ENCODE measurements at regions of chr18 and their contacts with region 1.

Region 1: DNA sequence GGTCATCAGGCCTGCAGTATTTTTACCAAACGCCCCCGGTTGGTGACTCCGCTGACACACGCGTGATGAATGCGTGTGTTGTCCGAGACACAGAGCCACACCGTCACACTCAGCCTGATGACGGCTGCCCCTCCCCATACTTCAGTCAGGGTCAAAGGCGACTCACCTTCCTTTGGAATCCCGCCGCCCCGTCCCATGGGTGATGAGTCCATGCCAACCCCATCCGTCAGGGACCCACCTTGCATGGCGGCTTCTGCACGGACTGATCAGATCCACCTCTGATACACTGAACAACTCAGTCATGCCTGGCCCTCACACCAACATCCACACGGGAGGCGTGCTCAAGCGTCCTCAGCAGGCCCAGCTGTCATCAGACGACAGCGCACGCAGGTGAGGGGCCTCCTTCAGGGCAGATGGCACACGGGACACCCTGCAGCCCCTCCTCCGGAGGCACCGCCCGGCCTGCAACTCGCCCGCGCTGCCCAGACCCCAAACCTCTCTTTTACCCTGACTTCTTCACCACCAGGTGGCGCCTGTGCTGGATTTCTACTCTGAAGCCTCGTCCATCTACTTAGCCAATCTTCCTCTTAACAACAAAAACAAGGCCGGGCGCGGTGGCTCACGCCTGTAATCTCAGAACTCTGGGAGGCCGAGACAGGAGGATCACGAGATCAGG is 89.2 kb downstream of the ZNF516 start:
- DNase-seq: no peak
- H3K4me3 ChIP-seq: no peak overlapping the region
- H3K27ac ChIP-seq: no peak overlapping the region
- H3K4me1 ChIP-seq: no peaks in the 10 kb centered on the region
- H3K27me3 ChIP-seq: no peaks in the 10 kb centered on the region
- CTCF ChIP-seq: peak; percentile 31 to 64 (median 47)
- POLR2A ChIP-seq: no peak

Region 2: GRCh38 chr18:75728621-75729020 is 677.2 kb before region 1 on chr18:
- intact Hi-C with region 1: no loop called
- DNase-seq: no peak
- H3K4me3 ChIP-seq: no peak overlapping the region
- H3K27ac ChIP-seq: no peak overlapping the region
- H3K4me1 ChIP-seq: no peaks in the 10 kb centered on the region
- H3K27me3 ChIP-seq: no peaks in the 10 kb centered on the region
- CTCF ChIP-seq: no peak
- POLR2A ChIP-seq: no peak

Region 3: GRCh38 chr18:76426737-76427305 is 21.0 kb after region 1 on chr18:
- intact Hi-C with region 1: no loop called
- DNase-seq: no peak
- H3K4me3 ChIP-seq: no peak overlapping the region
- H3K27ac ChIP-seq: no peak overlapping the region
- H3K4me1 ChIP-seq: peaks cover 0 to 5% of the 10 kb centered on the region in 2 donors
- H3K27me3 ChIP-seq: no peaks in the 10 kb centered on the region
- CTCF ChIP-seq: peak in 1 of 3 donors; percentile 39
- POLR2A ChIP-seq: no peak

Region 4: DNA sequence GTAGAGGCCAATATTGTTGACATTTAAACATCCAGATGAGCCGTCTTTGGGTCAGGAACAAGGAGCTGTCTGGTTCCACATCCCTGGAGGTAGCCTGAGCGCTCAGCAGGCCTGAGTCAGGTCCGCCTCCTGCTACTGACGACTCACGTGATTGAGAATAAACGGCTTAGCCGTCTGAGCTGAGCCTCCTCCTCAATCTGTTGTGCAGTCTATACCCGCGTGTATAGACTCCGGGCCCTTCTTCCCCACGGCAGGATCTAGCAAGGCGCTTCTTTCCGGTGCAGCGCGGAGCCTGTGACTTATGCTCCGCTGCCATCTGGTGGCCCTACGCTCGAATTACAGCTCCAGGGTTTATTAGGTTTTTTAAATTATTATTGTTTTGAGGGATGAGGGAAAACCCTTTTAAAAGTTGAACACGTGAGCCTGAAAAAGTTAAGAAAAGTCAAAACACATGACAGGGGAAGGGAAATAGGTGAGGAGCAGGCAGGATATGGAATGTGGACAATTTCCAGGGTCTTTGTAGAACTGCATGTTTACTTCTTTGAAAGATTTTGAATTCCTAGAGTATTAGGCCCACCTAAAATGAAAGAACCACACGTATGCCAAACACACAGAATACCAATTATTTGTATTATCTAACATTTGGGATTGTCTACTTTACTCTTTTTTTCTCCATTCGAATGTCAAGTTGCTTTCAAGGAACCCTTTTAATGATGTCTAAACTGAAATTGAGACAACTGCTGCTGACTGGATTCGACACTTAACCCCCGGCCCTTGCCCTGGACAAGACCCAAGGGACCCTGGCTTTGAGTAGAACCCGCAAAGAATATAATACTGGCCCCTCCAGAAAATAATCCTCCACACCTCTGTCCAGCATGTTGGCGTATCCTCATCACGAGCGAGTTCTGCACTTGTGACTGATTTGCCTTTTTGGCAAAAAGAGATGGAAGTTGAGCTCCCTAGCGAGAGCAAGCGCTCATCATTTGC is 304.1 kb after region 1 on chr18:
- intact Hi-C with region 1: loop called (anchors 10 kb)
- DNase-seq: peak; percentile 33 to 60
- H3K4me3 ChIP-seq: peak overlapping the region in 1 of 3 donors; percentile 39
- H3K27ac ChIP-seq: no peak overlapping the region
- H3K4me1 ChIP-seq: no peaks in the 10 kb centered on the region
- H3K27me3 ChIP-seq: no peaks in the 10 kb centered on the region
- CTCF ChIP-seq: peak; percentile 62 to 92 (median 86)
- POLR2A ChIP-seq: no peak

Region 5: DNA sequence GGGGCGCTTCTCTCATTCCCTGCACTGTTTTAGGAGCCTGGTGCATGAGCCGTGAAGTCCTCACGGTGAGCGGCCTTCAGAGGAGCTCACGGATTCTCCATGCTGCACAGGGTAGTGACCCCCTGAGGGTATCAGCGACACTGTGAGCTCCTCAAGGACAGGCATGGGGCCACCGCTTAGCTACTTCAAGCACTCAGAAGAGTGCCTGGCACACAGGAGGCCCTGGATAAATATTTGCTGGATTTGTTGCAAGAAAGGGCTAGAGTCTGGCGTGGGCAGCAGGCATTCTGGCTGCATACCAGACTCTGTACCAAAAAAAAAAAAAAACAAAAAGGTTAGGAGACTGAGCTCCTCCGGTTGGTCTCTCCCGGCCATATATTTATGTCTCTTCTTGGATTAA is 732.5 kb after region 1 on chr18:
- intact Hi-C with region 1: loop called (anchors 5 kb)
- DNase-seq: no peak
- H3K4me3 ChIP-seq: no peak overlapping the region
- H3K27ac ChIP-seq: no peak overlapping the region
- H3K4me1 ChIP-seq: no peaks in the 10 kb centered on the region
- H3K27me3 ChIP-seq: no peaks in the 10 kb centered on the region
- CTCF ChIP-seq: no peak
- POLR2A ChIP-seq: no peak

Region 6: DNA sequence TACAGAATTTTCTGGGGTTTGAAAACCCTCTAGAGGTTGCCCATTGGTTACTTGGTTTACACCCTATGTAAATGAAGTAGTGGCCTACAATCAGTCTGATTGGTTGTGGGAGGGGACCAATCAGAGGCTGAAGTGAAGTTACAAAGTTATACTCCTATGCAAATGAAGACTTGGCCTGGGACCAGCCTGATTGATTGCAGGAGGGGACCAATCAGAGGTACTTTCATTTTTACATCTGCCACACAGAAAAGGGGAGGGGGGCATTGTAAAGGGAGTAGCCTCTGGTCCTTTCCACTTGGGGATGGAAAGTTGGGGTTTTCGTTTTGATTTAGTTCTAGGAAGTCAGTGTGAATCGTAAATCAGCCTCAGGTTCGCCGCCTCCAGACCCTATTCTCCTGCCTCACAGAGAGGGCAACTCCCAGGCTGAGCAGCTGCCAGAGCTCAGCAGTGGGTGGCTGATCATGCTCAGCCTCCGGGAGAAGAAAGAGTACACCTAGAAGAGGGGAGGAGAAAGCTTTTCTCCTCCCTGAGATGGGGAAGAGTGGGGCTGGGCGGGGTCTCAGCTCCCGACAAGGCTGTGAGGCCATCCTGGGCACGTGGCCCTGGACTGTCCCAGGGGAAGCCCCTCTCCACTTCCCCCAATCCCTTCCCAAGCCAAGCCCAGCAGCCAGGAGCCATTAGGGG is 1216.3 kb after region 1 on chr18:
- intact Hi-C with region 1: no loop called
- DNase-seq: no peak
- H3K4me3 ChIP-seq: peak overlapping the region in 1 of 3 donors; percentile 15
- H3K27ac ChIP-seq: no peak overlapping the region
- H3K4me1 ChIP-seq: no peaks in the 10 kb centered on the region
- H3K27me3 ChIP-seq: no peaks in the 10 kb centered on the region
- CTCF ChIP-seq: no peak
- POLR2A ChIP-seq: no peak

Measured in breast epithelium (tissue), 4 donors.